HepG2 (cell line): ENCODE measurements at regions of chr1 and their contacts with region 1.

Region 1: GRCh38 chr1:192477630-192478029 is 97.9 kb upstream of the RGS1 start:
- DNase-seq: peak; percentile 16
- ATAC-seq: no peak; the same call in 2 of the 3 replicates
- H3K4me3 ChIP-seq: no peak overlapping the region
- H3K27ac ChIP-seq: no peak overlapping the region
- H3K4me1 ChIP-seq: no peaks in the 10 kb centered on the region
- H3K27me3 ChIP-seq: peaks cover 0 to 10% of the 10 kb centered on the region in 2 experiments; a peak in 1 of 5 replicates
- CTCF ChIP-seq: peak; percentile 56
- EP300 ChIP-seq: no peak
- POLR2A ChIP-seq: no peak
- RAD21 ChIP-seq: no peak; the same call in 1 of the 2 replicates

Region 2: DNA sequence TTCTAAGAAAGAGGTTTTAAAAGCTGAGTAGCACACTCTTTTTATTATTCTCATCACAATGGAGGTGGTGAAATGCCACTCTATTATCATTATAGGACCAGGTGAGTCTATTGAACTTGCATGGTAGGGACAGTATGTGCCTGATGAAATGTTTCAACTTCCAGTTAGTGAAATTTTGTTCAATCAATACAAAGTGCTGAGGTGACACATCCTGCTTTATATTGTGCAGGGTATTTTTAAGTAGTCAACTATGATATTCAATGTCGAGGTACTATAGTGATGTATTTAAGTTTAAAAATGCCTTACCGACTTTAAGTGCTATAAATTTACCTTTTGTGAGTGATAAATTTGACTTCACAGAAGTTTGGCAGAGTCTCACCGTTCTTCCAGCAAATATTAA is 1715.3 kb before region 1 on chr1:
- CTCF ChIA-PET with region 1: no interaction called
- POLR2A ChIA-PET with region 1: no interaction called
- in situ Hi-C with region 1: no loop called
- intact Hi-C with region 1: no loop called
- DNase-seq: no peak
- ATAC-seq: no peak
- H3K4me3 ChIP-seq: no peak overlapping the region
- H3K27ac ChIP-seq: no peak overlapping the region
- H3K4me1 ChIP-seq: no peaks in the 10 kb centered on the region
- H3K27me3 ChIP-seq: no peaks in the 10 kb centered on the region
- CTCF ChIP-seq: no peak
- EP300 ChIP-seq: no peak
- POLR2A ChIP-seq: no peak
- RAD21 ChIP-seq: no peak

Region 3: GRCh38 chr1:192109576-192109975 is 368.1 kb before region 1 on chr1:
- CTCF ChIA-PET with region 1: no interaction called
- POLR2A ChIA-PET with region 1: no interaction called
- in situ Hi-C with region 1: no loop called
- intact Hi-C with region 1: no loop called
- DNase-seq: no peak
- ATAC-seq: no peak
- H3K4me3 ChIP-seq: no peak overlapping the region
- H3K27ac ChIP-seq: no peak overlapping the region
- H3K4me1 ChIP-seq: no peaks in the 10 kb centered on the region
- H3K27me3 ChIP-seq: no peaks in the 10 kb centered on the region
- CTCF ChIP-seq: no peak
- EP300 ChIP-seq: no peak
- POLR2A ChIP-seq: no peak
- RAD21 ChIP-seq: no peak

Region 4: GRCh38 chr1:192609110-192610079 is 131.8 kb after region 1 on chr1:
- CTCF ChIA-PET with region 1: interaction called, 12 read pairs
- POLR2A ChIA-PET with region 1: no interaction called
- in situ Hi-C with region 1: loop called (anchors 5 kb)
- intact Hi-C with region 1: loop called (anchors 1 kb)
- DNase-seq: no peak
- ATAC-seq: no peak
- H3K4me3 ChIP-seq: no peak overlapping the region
- H3K27ac ChIP-seq: no peak overlapping the region
- H3K4me1 ChIP-seq: 0 out of 2 replicates have a peak, but pooled peaks cover 13% of the 10 kb centered on the region
- H3K27me3 ChIP-seq: no peaks in the 10 kb centered on the region
- CTCF ChIP-seq: no peak
- EP300 ChIP-seq: no peak
- POLR2A ChIP-seq: no peak
- RAD21 ChIP-seq: no peak

Region 5: GRCh38 chr1:192766009-192766625 is 288.5 kb after region 1 on chr1:
- CTCF ChIA-PET with region 1: no interaction called
- POLR2A ChIA-PET with region 1: no interaction called
- in situ Hi-C with region 1: loop called (anchors 25 kb)
- intact Hi-C with region 1: no loop called
- DNase-seq: no peak
- ATAC-seq: no peak
- H3K4me3 ChIP-seq: no peak overlapping the region
- H3K27ac ChIP-seq: no peak overlapping the region
- H3K4me1 ChIP-seq: peaks cover 4% of the 10 kb centered on the region
- H3K27me3 ChIP-seq: no peaks in the 10 kb centered on the region; a peak in 1 of 5 replicates
- CTCF ChIP-seq: no peak
- EP300 ChIP-seq: no peak
- POLR2A ChIP-seq: no peak
- RAD21 ChIP-seq: no peak

Region 6: GRCh38 chr1:193019442-193020026 is 541.9 kb after region 1 on chr1:
- CTCF ChIA-PET with region 1: interaction called, 15 read pairs
- POLR2A ChIA-PET with region 1: interaction called, 4 read pairs
- in situ Hi-C with region 1: loop called (anchors 5 kb)
- intact Hi-C with region 1: loop called (anchors 1 kb)
- DNase-seq: peak; percentile 41
- ATAC-seq: no peak
- H3K4me3 ChIP-seq: no peak overlapping the region
- H3K27ac ChIP-seq: no peak overlapping the region
- H3K4me1 ChIP-seq: 0 out of 2 replicates have a peak, but pooled peaks cover 4% of the 10 kb centered on the region
- H3K27me3 ChIP-seq: no peaks in the 10 kb centered on the region
- CTCF ChIP-seq: peak; percentile 62
- EP300 ChIP-seq: no peak
- POLR2A ChIP-seq: no peak
- RAD21 ChIP-seq: no peak

Region 7: DNA sequence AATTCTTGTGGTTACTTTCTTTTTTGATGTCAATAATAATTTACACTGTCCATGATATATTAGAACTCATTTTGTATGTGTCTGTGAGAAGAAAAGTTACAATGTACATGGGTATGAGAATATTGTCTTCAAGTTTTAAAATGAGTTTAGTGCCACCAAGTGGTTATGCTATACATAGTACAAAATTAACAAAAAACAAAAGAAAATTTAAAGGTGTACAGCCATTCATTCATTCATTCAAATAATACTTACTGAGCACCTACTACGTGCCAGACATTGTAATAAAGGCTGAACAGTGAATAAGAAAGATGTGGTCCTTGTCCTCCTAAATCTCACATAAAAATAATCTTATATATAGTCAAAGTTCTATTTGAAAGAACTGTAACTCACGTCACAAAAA is 553.8 kb after region 1 on chr1:
- CTCF ChIA-PET with region 1: no interaction called
- POLR2A ChIA-PET with region 1: no interaction called
- in situ Hi-C with region 1: no loop called
- intact Hi-C with region 1: loop called (anchors 1 kb)
- DNase-seq: no peak
- ATAC-seq: peak; percentile 32; the same call in 1 of the 3 replicates
- H3K4me3 ChIP-seq: no peak overlapping the region
- H3K27ac ChIP-seq: no peak overlapping the region
- H3K4me1 ChIP-seq: peaks cover 14% of the 10 kb centered on the region
- H3K27me3 ChIP-seq: no peaks in the 10 kb centered on the region
- CTCF ChIP-seq: peak; percentile 36
- EP300 ChIP-seq: no peak
- POLR2A ChIP-seq: no peak
- RAD21 ChIP-seq: no peak